ENCODE measurements at regions of chr15 and their contacts with region 1.

Region 1: GRCh38 chr15:70870051-70870450 is 16.1 kb upstream of the LARP6 start:
- DNase-seq: no peak
- ATAC-seq: peak in 4 of 8 donors; percentile 27 to 46 (median 36)
- H3K4me3 ChIP-seq: no peak overlapping the region
- H3K27ac ChIP-seq: peak overlapping the region in 4 of 10 donors; percentile 3 to 71 (median 48)
- H3K4me1 ChIP-seq: peaks cover 0 to 42% (median 37%) of the 10 kb centered on the region in 9 donors
- H3K27me3 ChIP-seq: no peaks in the 10 kb centered on the region
- CTCF ChIP-seq: no peak

Region 2: GRCh38 chr15:70788114-70789049 is 81.7 kb before region 1 on chr15:
- intact Hi-C with region 1: loop called in 1 of 10 experiments (anchors 2 kb)
- DNase-seq: no peak
- ATAC-seq: no peak
- H3K4me3 ChIP-seq: no peak overlapping the region
- H3K27ac ChIP-seq: no peak overlapping the region
- H3K4me1 ChIP-seq: no peaks in the 10 kb centered on the region
- H3K27me3 ChIP-seq: no peaks in the 10 kb centered on the region
- CTCF ChIP-seq: no peak

Region 3: DNA sequence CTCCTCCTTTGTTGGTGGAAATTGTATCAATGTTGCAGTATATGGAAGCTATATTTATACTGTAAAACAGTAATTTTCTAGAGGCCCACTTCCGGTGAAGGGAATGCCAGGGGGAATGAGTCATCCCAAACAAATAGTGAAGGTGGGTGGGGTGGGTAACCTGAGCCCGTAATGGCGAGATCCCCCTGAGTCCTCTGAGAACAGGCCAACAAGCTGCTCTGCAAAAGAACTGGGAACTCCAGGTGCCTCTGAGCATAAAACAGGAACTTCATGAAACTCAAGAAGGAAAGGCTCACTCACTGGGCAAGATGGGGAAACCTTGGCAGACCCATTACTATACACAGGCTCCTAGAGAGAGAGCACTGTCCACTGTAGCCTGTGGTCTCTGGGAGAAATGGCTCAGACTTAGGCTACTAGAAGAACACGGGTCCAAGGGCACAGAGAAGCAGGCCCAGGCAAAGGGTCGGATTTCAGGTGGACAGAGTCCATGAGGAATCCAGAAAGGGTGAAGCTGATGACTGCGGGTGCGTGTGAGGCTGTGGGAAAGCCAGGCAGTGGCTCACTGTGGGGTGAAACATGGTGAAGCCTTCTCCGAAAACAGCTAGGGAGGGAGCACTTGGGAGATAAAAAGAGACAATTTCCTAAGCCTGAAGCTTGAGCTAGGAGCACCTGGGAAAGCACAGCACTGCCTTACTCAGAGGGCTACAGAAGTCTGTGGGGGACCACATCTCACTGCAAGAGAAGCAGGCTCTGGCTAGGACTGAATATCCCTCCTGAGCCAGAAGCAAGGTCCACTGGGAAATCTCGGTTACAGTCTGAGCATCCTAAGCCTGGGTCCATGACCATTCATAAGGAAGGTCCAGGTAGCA is 35.9 kb before region 1 on chr15:
- intact Hi-C with region 1: loop called in 4 of 10 experiments (anchors 5 kb)
- DNase-seq: no peak
- ATAC-seq: no peak
- H3K4me3 ChIP-seq: no peak overlapping the region
- H3K27ac ChIP-seq: peak overlapping the region in 8 of 10 donors; percentile 11 to 86 (median 70)
- H3K4me1 ChIP-seq: peaks cover 0 to 57% (median 41%) of the 10 kb centered on the region in 9 donors
- H3K27me3 ChIP-seq: no peaks in the 10 kb centered on the region
- CTCF ChIP-seq: no peak

Region 4: GRCh38 chr15:71048913-71049675 is 179.0 kb after region 1 on chr15:
- intact Hi-C with region 1: no loop called
- DNase-seq: no peak
- ATAC-seq: no peak
- H3K4me3 ChIP-seq: no peak overlapping the region
- H3K27ac ChIP-seq: peak overlapping the region in 1 of 10 donors; percentile 34
- H3K4me1 ChIP-seq: peaks cover 0 to 16% (median 0%) of the 10 kb centered on the region in 9 donors
- H3K27me3 ChIP-seq: no peaks in the 10 kb centered on the region
- CTCF ChIP-seq: no peak

Measured in heart right ventricle (tissue), 16 donors.